HepG2 (cell line): ENCODE measurements at regions of chr12 and their contacts with region 1.

Region 1: GRCh38 chr12:55681142-55682077 is 26.3 kb downstream of the ITGA7 start:
- DNase-seq: peak; percentile 92
- ATAC-seq: peak; percentile 96
- H3K4me3 ChIP-seq: peak overlapping the region; percentile 70 to 90 (median 88)
- H3K27ac ChIP-seq: peak overlapping the region; percentile 72
- H3K4me1 ChIP-seq: peaks cover 22% of the 10 kb centered on the region
- H3K27me3 ChIP-seq: no peaks in the 10 kb centered on the region; a peak in 1 of 5 replicates
- CTCF ChIP-seq: peak; percentile 91
- EP300 ChIP-seq: peak in 1 of 2 experiments; percentile 40; a peak in 1 of 4 replicates
- POLR2A ChIP-seq: peak; percentile 94 to 98
- RAD21 ChIP-seq: peak; percentile 62

Region 2: GRCh38 chr12:55585824-55586223 is 95.6 kb before region 1 on chr12:
- CTCF ChIA-PET with region 1: no interaction called
- POLR2A ChIA-PET with region 1: no interaction called
- in situ Hi-C with region 1: no loop called
- intact Hi-C with region 1: no loop called
- DNase-seq: no peak
- ATAC-seq: no peak
- H3K4me3 ChIP-seq: no peak overlapping the region
- H3K27ac ChIP-seq: no peak overlapping the region
- H3K4me1 ChIP-seq: no peaks in the 10 kb centered on the region
- H3K27me3 ChIP-seq: no peaks in the 10 kb centered on the region
- CTCF ChIP-seq: no peak
- EP300 ChIP-seq: no peak
- POLR2A ChIP-seq: no peak
- RAD21 ChIP-seq: no peak

Region 3: GRCh38 chr12:55659486-55660385 is 21.7 kb before region 1 on chr12:
- CTCF ChIA-PET with region 1: interaction called, 9 read pairs
- POLR2A ChIA-PET with region 1: no interaction called
- in situ Hi-C with region 1: no loop called
- intact Hi-C with region 1: loop called (anchors 1 kb)
- DNase-seq: peak; percentile 27
- ATAC-seq: peak; percentile 76
- H3K4me3 ChIP-seq: no peak overlapping the region
- H3K27ac ChIP-seq: no peak overlapping the region
- H3K4me1 ChIP-seq: peaks cover 10% of the 10 kb centered on the region
- H3K27me3 ChIP-seq: 0 out of 5 replicates have a peak, but pooled peaks cover 0 to 1% of the 10 kb centered on the region in 2 experiments
- CTCF ChIP-seq: peak; percentile 66
- EP300 ChIP-seq: no peak
- POLR2A ChIP-seq: no peak
- RAD21 ChIP-seq: peak; percentile 49; the same call in 1 of the 2 replicates

Region 4: GRCh38 chr12:55700255-55701018 is 19.0 kb after region 1 on chr12:
- CTCF ChIA-PET with region 1: no interaction called
- POLR2A ChIA-PET with region 1: interaction called, 14 read pairs
- in situ Hi-C with region 1: no loop called
- intact Hi-C with region 1: loop called (anchors 1 kb)
- DNase-seq: no peak
- ATAC-seq: no peak
- H3K4me3 ChIP-seq: peak overlapping the region in 1 of 3 experiments; percentile 5; a peak in 1 of 6 replicates
- H3K27ac ChIP-seq: no peak overlapping the region
- H3K4me1 ChIP-seq: peaks cover 88% of the 10 kb centered on the region
- H3K27me3 ChIP-seq: peaks cover 6 to 17% of the 10 kb centered on the region in 2 experiments; a peak in 3 of 5 replicates
- CTCF ChIP-seq: no peak
- EP300 ChIP-seq: no peak
- POLR2A ChIP-seq: no peak
- RAD21 ChIP-seq: no peak

Region 5: DNA sequence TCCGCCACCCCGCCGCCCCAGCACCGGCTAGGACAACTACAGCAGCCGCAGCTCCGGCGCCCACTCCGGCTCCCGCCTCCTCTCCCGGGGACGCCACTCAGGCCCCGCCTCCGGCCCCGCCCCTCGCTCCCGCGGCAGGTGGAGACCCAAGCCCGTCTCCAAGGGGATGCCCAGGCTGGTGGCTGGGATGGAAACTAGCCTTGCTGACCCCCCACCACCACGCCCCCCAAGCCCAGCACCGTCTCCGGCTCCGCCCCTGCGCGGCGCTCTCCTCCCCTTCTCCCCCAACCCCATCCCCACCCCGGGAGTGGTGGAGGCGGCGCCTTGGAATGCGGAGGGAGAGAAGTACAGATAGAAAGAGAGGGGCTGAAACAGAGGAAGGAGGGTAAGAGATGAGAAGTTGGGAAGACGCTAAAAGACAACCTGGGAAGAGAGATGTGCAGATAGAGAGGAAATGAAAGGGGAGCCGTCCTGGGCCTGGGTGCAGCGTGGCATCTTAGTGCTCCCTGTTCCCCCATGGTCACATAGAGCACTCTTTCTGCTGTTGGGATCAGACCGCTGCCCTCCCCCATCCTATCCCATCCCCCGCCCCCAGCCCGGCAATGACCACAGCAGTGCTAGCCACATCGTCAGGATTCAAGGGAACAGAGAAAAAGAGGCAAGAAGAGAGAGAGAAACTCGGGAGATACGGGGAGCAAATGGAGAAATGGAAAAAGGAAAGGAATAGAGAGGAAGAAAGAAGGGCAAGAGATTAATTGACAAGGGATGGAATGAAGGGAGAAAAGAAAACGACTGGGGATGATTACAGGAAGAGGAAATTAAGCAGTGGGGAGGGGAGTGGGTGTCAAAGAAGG is 26.7 kb after region 1 on chr12 and contains the start of gene ITGA7:
- CTCF ChIA-PET with region 1: no interaction called
- POLR2A ChIA-PET with region 1: interaction called, 14 read pairs
- in situ Hi-C with region 1: no loop called
- intact Hi-C with region 1: no loop called
- DNase-seq: no peak
- ATAC-seq: peak; percentile 52
- H3K4me3 ChIP-seq: peak within 1 kb of the TSS; percentile 29 to 71 (median 51); a peak in 5 of 6 replicates
- H3K27ac ChIP-seq: no peak within 1 kb of the TSS
- H3K4me1 ChIP-seq: peaks cover 48% of the 10 kb centered on the region
- H3K27me3 ChIP-seq: peaks cover 1 to 68% of the 10 kb centered on the region in 2 experiments; a peak in 4 of 5 replicates
- CTCF ChIP-seq: no peak
- EP300 ChIP-seq: no peak
- POLR2A ChIP-seq: no peak
- RAD21 ChIP-seq: no peak
- total RNA-seq, gene ITGA7: 0.24 and 0.75 TPM in 2 replicates

Region 6: DNA sequence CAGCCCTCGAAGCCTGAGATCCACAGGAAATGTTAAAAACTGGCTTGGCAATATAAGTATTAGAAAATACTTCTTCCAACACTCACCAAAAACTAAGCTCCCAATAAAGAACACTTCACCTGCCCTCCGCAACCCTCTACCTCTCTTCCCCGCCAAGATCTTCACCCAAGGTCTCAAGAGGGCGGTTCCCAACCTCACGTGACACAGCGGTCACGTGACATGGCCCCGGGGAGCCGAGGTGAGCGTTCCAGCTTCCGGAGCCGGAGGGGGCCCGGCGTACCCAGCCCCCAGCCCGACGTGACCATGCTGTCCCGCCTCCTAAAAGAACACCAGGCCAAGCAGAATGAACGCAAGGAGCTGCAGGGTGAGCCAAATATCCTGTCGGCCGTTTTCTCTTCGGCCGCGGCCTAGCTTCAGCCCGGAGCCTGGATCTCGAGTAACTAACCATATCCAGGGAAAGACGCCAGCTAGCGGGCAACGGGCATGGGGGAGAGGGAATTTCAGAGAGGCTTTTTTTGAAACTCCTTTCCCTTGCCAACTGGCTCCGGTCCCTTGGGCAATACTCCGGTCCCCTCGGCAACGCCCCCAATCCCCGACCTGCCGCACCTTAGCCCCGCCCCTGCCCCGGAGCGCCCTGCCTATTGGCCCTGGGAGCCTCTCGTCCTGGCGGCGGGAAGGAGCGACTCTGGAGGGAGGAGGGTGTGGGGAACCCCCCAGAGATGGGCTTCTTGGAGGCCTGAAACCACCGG is 34.6 kb after region 1 on chr12 and contains the start of gene BLOC1S1:
- CTCF ChIA-PET with region 1: interaction called, 13 read pairs
- POLR2A ChIA-PET with region 1: interaction called, 23 read pairs
- in situ Hi-C with region 1: no loop called
- intact Hi-C with region 1: loop called (anchors 2 kb)
- DNase-seq: peak; percentile 86
- ATAC-seq: peak; percentile 82
- H3K4me3 ChIP-seq: peak within 1 kb of the TSS; percentile 77 to 96 (median 84)
- H3K27ac ChIP-seq: peak within 1 kb of the TSS; percentile 81
- H3K4me1 ChIP-seq: peaks cover 54% of the 10 kb centered on the region
- H3K27me3 ChIP-seq: peaks cover 0 to 11% of the 10 kb centered on the region in 2 experiments; a peak in 2 of 5 replicates
- CTCF ChIP-seq: no peak
- EP300 ChIP-seq: peak in 1 of 2 experiments; percentile 36; a peak in 1 of 4 replicates
- POLR2A ChIP-seq: peak; percentile 55 to 60
- RAD21 ChIP-seq: no peak
- total RNA-seq, gene BLOC1S1: 95.3 and 99.7 TPM in 2 replicates

Region 7: GRCh38 chr12:55728939-55729823 is 47.8 kb after region 1 on chr12 and contains the start of gene CD63:
- CTCF ChIA-PET with region 1: interaction called, 3 read pairs
- POLR2A ChIA-PET with region 1: interaction called, 14 read pairs
- in situ Hi-C with region 1: no loop called
- intact Hi-C with region 1: loop called (anchors 2 kb)
- DNase-seq: peak; percentile 73
- ATAC-seq: peak; percentile 81
- H3K4me3 ChIP-seq: peak within 1 kb of the TSS; percentile 84 to 89 (median 84)
- H3K27ac ChIP-seq: peak within 1 kb of the TSS; percentile 79
- H3K4me1 ChIP-seq: peaks cover 38% of the 10 kb centered on the region
- H3K27me3 ChIP-seq: no peaks in the 10 kb centered on the region; a peak in 1 of 5 replicates
- CTCF ChIP-seq: peak; percentile 17; the same call in 1 of the 2 replicates
- EP300 ChIP-seq: 0 out of 4 replicates have a peak, but pooled peaks of 1 of the 2 experiments have one; percentile 12
- POLR2A ChIP-seq: peak; percentile 41 to 69; a peak in 2 of 4 replicates
- RAD21 ChIP-seq: no peak
- total RNA-seq, gene CD63: 134 and 277 TPM in 2 replicates